ENCODE measurements at regions of chr5 and their contacts with region 1.

Region 1: DNA sequence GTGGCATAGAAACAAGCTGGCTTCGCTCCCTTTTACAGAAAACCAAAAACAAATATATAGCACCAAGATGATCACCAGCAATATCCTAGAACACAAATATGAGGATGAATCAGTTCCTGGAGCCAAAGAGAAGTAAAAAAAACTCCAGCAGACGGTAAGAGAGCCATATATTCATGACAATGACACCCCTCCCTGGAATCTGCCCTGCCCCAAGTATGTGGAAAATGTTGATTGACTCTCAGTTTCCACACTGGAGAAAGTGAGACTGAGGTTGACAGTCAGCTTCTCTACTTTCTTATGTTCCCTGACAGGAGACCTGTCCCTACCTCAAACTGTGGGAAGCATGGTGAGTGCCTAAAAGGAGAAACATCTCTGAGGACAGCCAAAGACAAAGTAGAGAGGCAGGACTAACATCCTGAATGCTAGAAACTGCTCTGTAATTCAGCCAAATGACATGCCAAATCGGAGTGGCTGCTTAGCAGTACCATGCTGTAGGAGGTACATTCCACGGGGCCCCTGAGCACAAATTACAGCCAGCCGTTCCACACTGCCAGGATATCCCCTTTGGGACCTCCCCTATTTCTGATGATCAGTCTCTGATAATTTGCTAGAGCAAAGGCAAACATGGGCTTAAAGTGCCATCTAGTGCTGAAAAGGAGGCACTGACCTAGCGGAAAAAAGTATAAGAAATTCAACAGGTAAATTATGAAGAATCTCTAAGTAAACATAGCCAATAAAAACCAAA is 424.0 kb upstream of the RGMB start:
- DNase-seq: peak; percentile 86
- ATAC-seq: peak; percentile 84
- H3K4me3 ChIP-seq: no peak overlapping the region; the same call in 1 of the 2 replicates
- H3K27ac ChIP-seq: peak overlapping the region; percentile 66
- H3K4me1 ChIP-seq: peaks cover 4% of the 10 kb centered on the region; the same call in 1 of the 2 replicates
- H3K27me3 ChIP-seq: no peaks in the 10 kb centered on the region
- CTCF ChIP-seq: peak; percentile 83
- POLR2A ChIP-seq: peak; percentile 47
- RAD21 ChIP-seq: peak; percentile 95

Region 2: DNA sequence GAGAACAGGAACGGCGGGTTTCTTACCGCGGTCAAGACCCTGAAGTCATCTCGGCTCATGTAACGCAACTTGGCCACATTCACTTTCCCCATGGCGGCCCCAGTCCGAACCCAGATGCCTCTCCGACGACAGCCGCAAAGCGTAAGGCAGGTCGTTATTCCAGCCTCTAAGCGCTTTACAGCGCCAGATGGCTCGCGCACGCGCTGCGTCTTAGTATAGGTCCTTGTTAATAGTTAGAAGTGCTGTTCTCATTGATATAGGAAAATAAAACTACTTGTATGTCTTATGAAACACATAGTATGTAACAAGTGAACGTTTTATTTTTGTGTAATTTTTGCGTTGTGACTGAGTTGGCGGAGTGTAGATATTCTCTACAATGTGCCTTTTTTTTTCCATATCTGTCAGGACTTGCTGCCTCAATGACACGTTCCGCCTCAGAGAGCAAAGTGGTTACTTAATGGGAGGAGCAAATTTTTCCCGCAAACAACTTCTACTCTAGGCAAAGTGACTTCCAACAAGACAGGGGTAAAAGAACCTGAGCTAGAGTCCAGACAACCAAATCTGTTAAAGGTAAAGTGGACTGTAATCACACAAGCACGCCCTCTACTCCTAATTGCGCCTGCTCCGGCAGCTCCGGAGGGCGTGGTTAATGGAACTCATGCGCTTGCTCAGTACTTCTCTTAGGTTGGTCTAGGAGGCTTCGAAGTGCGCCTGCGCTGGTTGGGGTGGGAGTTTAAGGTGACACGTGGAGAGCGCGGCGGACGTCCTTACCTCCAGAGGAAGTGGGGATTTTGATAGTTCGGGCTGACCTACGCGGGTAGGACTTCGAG is 1166.1 kb before region 1 on chr5 and contains the start of gene RIOK2:
- CTCF ChIA-PET with region 1: no interaction called
- POLR2A ChIA-PET with region 1: no interaction called
- dilution Hi-C with region 1: no loop called
- in situ Hi-C with region 1: no loop called
- intact Hi-C with region 1: loop called (anchors 2 kb)
- DNase-seq: peak; percentile 93
- ATAC-seq: peak; percentile 96
- H3K4me3 ChIP-seq: peak within 1 kb of the TSS; percentile 82
- H3K27ac ChIP-seq: peak within 1 kb of the TSS; percentile 86
- H3K4me1 ChIP-seq: peaks cover 2% of the 10 kb centered on the region; the same call in 1 of the 2 replicates
- H3K27me3 ChIP-seq: no peaks in the 10 kb centered on the region
- CTCF ChIP-seq: no peak
- POLR2A ChIP-seq: peak; percentile 87
- RAD21 ChIP-seq: peak; percentile 16; the same call in 1 of the 2 replicates
- total RNA-seq, gene RIOK2: 17.7 and 26.1 TPM in 2 replicates

Region 3: DNA sequence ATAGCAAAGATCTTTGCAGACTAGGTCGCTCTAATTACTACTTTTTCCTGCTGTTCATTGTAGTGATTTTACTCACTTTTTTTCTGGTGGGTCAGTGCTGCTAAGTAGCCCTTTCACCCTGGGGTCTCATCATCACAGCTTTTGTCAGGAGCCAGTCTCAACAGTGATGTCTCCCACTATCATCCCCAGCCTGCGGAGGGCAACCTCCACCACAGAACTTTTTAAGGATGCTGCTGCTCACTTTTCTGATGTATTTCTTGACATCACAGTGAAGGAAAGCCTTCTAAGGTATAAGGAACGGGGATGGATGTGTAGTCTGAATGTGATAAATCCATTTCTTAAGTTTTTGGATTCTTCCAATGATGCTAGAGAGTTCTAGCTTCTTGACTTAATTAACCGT is 923.9 kb before region 1 on chr5:
- CTCF ChIA-PET with region 1: no interaction called
- POLR2A ChIA-PET with region 1: no interaction called
- dilution Hi-C with region 1: no loop called
- in situ Hi-C with region 1: no loop called
- intact Hi-C with region 1: loop called (anchors 1 kb)
- DNase-seq: peak; percentile 16
- ATAC-seq: no peak
- H3K4me3 ChIP-seq: no peak overlapping the region
- H3K27ac ChIP-seq: no peak overlapping the region
- H3K4me1 ChIP-seq: no peaks in the 10 kb centered on the region
- H3K27me3 ChIP-seq: no peaks in the 10 kb centered on the region
- CTCF ChIP-seq: peak; percentile 42
- POLR2A ChIP-seq: no peak
- RAD21 ChIP-seq: peak; percentile 49

Region 4: GRCh38 chr5:97838214-97838613 is 511.2 kb before region 1 on chr5:
- CTCF ChIA-PET with region 1: no interaction called
- POLR2A ChIA-PET with region 1: no interaction called
- dilution Hi-C with region 1: no loop called
- in situ Hi-C with region 1: no loop called
- intact Hi-C with region 1: loop called (anchors 10 kb)
- DNase-seq: peak; percentile 99
- ATAC-seq: peak; percentile 89
- H3K4me3 ChIP-seq: no peak overlapping the region
- H3K27ac ChIP-seq: no peak overlapping the region
- H3K4me1 ChIP-seq: peaks cover 3% of the 10 kb centered on the region
- H3K27me3 ChIP-seq: peaks cover 5% of the 10 kb centered on the region
- CTCF ChIP-seq: no peak
- POLR2A ChIP-seq: no peak
- RAD21 ChIP-seq: no peak

Region 5: DNA sequence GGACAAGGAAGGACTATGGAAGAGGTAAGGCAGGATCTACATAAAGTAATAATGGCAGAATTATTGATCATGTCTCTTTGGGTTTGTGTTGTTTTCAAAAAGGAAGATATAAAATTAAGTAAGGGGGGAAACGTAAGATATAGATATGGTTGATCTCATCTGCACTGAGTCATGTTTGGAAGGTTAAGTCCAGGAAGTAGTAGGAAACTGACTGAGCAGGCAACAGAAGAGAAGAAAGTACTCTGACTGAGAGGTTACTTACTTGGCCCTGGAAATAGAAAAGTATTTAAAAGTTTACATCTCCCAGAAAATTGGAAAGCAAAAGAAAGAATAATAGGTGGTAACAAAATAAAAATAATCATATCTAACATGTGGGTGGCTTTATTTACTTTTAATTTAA is 18.7 kb after region 1 on chr5:
- CTCF ChIA-PET with region 1: no interaction called
- POLR2A ChIA-PET with region 1: no interaction called
- dilution Hi-C with region 1: no loop called
- in situ Hi-C with region 1: no loop called
- intact Hi-C with region 1: no loop called
- DNase-seq: peak; percentile 28
- ATAC-seq: no peak
- H3K4me3 ChIP-seq: no peak overlapping the region
- H3K27ac ChIP-seq: no peak overlapping the region
- H3K4me1 ChIP-seq: no peaks in the 10 kb centered on the region
- H3K27me3 ChIP-seq: no peaks in the 10 kb centered on the region
- CTCF ChIP-seq: no peak
- POLR2A ChIP-seq: no peak
- RAD21 ChIP-seq: no peak

Region 6: GRCh38 chr5:98454904-98455303 is 105.5 kb after region 1 on chr5:
- CTCF ChIA-PET with region 1: no interaction called
- POLR2A ChIA-PET with region 1: no interaction called
- dilution Hi-C with region 1: no loop called
- in situ Hi-C with region 1: no loop called
- intact Hi-C with region 1: loop called (anchors 5 kb)
- DNase-seq: peak; percentile 97
- ATAC-seq: peak; percentile 69
- H3K4me3 ChIP-seq: peak overlapping the region; percentile 23; the same call in 1 of the 2 replicates
- H3K27ac ChIP-seq: peak overlapping the region; percentile 38; the same call in 1 of the 2 replicates
- H3K4me1 ChIP-seq: peaks cover 8% of the 10 kb centered on the region
- H3K27me3 ChIP-seq: no peaks in the 10 kb centered on the region
- CTCF ChIP-seq: peak; percentile 44
- POLR2A ChIP-seq: no peak
- RAD21 ChIP-seq: peak; percentile 62

Region 7: DNA sequence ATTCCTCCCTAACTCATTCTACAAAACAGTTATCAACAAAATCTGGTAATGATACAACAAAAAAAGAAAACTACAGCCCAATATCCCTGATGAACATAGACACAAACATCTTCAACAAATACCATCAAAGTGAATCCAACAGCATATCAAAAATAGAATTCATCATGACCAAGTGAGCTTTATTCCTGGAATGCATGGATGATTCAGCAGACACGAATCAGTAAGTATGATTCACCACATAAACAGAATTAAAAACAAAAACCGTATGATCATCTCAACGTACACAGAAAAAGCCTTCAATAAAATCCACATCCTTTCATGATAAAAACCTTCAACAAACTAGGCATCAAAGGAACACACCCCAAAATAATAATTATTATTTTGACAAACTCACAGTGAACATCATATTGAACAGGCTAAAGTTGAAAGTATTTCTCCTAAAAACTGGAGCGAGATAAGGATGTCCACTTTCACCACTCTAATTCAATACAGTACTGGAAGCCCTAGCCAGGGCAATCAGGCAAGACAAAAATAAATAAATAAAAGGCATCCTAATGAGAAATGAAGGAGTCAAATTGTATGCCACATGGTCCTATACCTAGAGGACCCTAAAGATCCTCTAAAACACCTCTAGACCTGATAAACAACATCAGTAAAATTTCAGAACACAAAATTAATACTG is 118.9 kb after region 1 on chr5:
- CTCF ChIA-PET with region 1: no interaction called
- POLR2A ChIA-PET with region 1: no interaction called
- dilution Hi-C with region 1: no loop called
- in situ Hi-C with region 1: no loop called
- intact Hi-C with region 1: no loop called
- DNase-seq: peak; percentile 95
- ATAC-seq: peak; percentile 82
- H3K4me3 ChIP-seq: no peak overlapping the region
- H3K27ac ChIP-seq: peak overlapping the region; percentile 82
- H3K4me1 ChIP-seq: peaks cover 8% of the 10 kb centered on the region
- H3K27me3 ChIP-seq: no peaks in the 10 kb centered on the region
- CTCF ChIP-seq: no peak
- POLR2A ChIP-seq: no peak
- RAD21 ChIP-seq: no peak